Activated naive CD4-positive, alpha-beta T cell treated with anti-CD3 and anti-CD28 coated beads, Interleukin-2, amount 10 ng/mL, durations not matched to agents 7 days and 5 days (primary cell): ENCODE measurements at regions of chr19 and their contacts with region 1.

Region 1: DNA sequence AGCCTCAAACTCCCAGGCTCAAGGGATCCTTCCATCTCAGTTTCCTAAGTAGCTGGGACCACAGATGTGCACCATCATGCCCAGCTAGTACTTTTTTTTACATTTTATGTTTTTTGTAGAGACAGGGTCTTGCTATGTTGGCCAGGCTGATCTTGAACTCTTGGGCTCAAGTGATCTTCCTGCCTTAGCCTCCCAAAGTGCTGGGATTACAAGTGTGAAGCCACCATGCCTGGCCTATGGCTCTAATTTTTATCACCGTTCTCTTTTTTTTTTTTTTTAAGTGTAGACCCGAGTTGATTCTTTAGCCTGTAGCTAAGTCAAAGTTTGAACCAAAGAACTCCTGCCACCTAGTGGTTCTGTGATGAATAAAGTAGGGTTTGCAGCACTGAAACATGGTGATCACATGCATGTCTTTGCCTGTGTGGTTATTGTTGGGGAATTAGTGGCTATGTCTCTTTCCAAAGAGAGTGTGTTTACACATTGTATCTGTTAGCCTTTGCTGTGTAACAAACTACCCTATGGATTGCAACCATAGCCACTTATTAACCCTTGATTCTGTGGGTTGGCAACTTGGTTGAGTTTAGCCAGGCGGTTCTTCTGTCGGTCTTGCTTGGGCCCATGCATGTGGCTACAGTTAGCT is 11.6 kb downstream of the NFILZ start:
- DNase-seq: peak; percentile 37
- H3K4me3 Mint-ChIP-seq: no peak overlapping the region
- H3K27ac Mint-ChIP-seq: no peak overlapping the region
- H3K4me1 Mint-ChIP-seq: peaks cover 3% of the 10 kb centered on the region
- H3K27me3 Mint-ChIP-seq: peaks cover 58% of the 10 kb centered on the region

Region 2: GRCh38 chr19:8654591-8655339 is 12.7 kb after region 1 on chr19:
- CTCF ChIA-PET with region 1: interaction called, 16 read pairs
- DNase-seq: peak; percentile 75
- H3K4me3 Mint-ChIP-seq: no peak overlapping the region
- H3K27ac Mint-ChIP-seq: peak overlapping the region; percentile 11
- H3K4me1 Mint-ChIP-seq: peaks cover 38% of the 10 kb centered on the region
- H3K27me3 Mint-ChIP-seq: peaks cover 60% of the 10 kb centered on the region